ENCODE measurements at regions of chr5 and their contacts with region 1.

Region 1: GRCh38 chr5:147822686-147823491 is 8.6 kb downstream of the SPINK1 start:
- DNase-seq: peak; percentile 34
- CTCF ChIP-seq: peak; percentile 83

Region 2: GRCh38 chr5:147093160-147093559 is 729.7 kb before region 1 on chr5:
- in situ Hi-C with region 1: no loop called
- DNase-seq: no peak
- CTCF ChIP-seq: no peak

Region 3: GRCh38 chr5:147628058-147628895 is 194.6 kb before region 1 on chr5:
- in situ Hi-C with region 1: loop called (anchors 25 kb)
- DNase-seq: peak; percentile 48
- CTCF ChIP-seq: peak; percentile 74

Region 4: DNA sequence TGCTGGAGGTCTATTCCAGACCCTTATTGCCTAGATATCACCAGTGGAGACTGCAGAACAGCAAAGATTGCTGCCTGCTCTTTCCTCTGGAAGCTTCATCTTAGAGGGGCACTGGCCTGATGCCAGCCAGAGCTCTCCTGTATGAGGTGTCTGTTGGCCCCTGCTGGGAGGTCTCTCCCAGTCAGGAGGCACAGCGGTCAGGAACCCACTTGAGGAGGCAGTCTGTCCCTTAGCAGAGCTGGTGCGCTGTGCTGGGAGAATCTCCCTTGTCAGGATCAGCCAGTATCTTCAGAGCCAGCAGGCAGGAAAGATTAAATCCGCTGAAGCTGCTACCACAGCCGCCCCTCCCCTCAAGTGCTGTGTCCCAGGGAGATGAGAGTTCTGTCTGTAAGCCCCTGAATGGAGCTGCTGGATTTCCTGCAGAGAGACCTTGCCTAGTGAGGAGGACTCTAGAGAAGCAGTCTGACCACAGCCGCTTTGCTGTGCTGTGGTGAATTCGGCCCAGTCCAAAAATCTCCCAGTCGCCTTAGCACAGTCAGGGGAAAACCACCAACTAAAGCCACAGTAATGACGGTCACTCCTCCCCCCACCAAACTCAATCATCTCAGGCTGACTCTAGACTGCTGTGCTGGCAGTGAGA is 164.5 kb before region 1 on chr5:
- in situ Hi-C with region 1: no loop called
- DNase-seq: no peak
- CTCF ChIP-seq: no peak